H1 (cell line): ENCODE measurements at regions of chr1 and their contacts with region 1.

Region 1: GRCh38 chr1:23496490-23497181 is 12.7 kb upstream of the ASAP3 start:
- DNase-seq: no peak
- H3K4me3 ChIP-seq: no peak overlapping the region
- H3K27ac ChIP-seq: no peak overlapping the region
- H3K4me1 ChIP-seq: no peaks in the 10 kb centered on the region
- H3K27me3 ChIP-seq: no peaks in the 10 kb centered on the region
- CTCF ChIP-seq: no peak
- EP300 ChIP-seq: no peak
- POLR2A ChIP-seq: no peak
- RAD21 ChIP-seq: no peak

Region 2: DNA sequence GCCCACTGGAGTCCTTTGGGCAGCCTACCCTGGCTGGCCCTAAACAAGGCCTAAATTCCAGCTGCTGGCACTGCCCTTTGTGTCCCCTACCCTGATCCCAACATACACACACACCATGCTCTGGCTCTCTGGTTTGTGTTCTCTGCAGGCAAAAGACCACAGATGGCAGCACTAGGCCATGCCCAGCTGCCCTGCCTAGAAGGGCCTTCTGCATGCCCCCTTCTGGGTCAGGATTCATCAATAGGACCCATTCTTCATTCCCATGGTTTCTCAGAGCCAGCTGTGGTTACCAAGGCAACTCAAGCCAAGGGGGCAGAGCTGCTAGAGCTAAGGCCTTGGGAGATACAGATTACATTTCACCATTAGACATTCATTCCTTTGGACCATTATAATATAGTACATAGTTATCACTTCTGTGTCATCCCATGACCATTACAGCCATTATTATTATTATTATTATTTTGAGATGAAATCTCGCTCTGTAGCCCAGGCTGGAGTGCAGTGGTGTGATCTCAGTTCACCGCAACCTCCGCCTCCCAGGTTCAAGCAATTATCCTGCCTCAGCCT is 30.1 kb before region 1 on chr1:
- CTCF ChIA-PET with region 1: interaction called, 10 read pairs
- POLR2A ChIA-PET with region 1: no interaction called
- DNase-seq: no peak
- H3K4me3 ChIP-seq: no peak overlapping the region
- H3K27ac ChIP-seq: no peak overlapping the region
- H3K4me1 ChIP-seq: no peaks in the 10 kb centered on the region
- H3K27me3 ChIP-seq: no peaks in the 10 kb centered on the region
- CTCF ChIP-seq: peak in 1 of 3 experiments; percentile 5; a peak in 1 of 4 replicates
- EP300 ChIP-seq: no peak
- POLR2A ChIP-seq: no peak
- RAD21 ChIP-seq: 0 out of 4 replicates have a peak, but pooled peaks of 1 of the 2 experiments have one; percentile 8

Region 3: GRCh38 chr1:23514111-23514679 is 17.6 kb after region 1 on chr1:
- CTCF ChIA-PET with region 1: interaction called, 230 read pairs
- POLR2A ChIA-PET with region 1: no interaction called
- DNase-seq: no peak
- H3K4me3 ChIP-seq: no peak overlapping the region
- H3K27ac ChIP-seq: no peak overlapping the region
- H3K4me1 ChIP-seq: no peaks in the 10 kb centered on the region
- H3K27me3 ChIP-seq: no peaks in the 10 kb centered on the region
- CTCF ChIP-seq: no peak
- EP300 ChIP-seq: no peak
- POLR2A ChIP-seq: no peak
- RAD21 ChIP-seq: no peak

Region 4: GRCh38 chr1:23539698-23540266 is 43.1 kb after region 1 on chr1:
- CTCF ChIA-PET with region 1: interaction called, 149 read pairs
- POLR2A ChIA-PET with region 1: no interaction called
- DNase-seq: peak; percentile 95 to 98
- H3K4me3 ChIP-seq: no peak overlapping the region
- H3K27ac ChIP-seq: no peak overlapping the region
- H3K4me1 ChIP-seq: peaks cover 0 to under 1% (median 0%) of the 10 kb centered on the region in 4 experiments; a peak in 2 of 7 replicates
- H3K27me3 ChIP-seq: no peaks in the 10 kb centered on the region
- CTCF ChIP-seq: peak; percentile 82 to 97 (median 94)
- EP300 ChIP-seq: peak in 1 of 2 experiments; percentile 53; a peak in 1 of 3 replicates
- POLR2A ChIP-seq: no peak
- RAD21 ChIP-seq: peak; percentile 97 to 98

Region 5: GRCh38 chr1:23619299-23620188 is 122.9 kb after region 1 on chr1:
- CTCF ChIA-PET with region 1: no interaction called
- POLR2A ChIA-PET with region 1: no interaction called
- DNase-seq: peak in 1 of 2 experiments; percentile 72
- H3K4me3 ChIP-seq: peak overlapping the region; percentile 6 to 55 (median 28)
- H3K27ac ChIP-seq: no peak overlapping the region
- H3K4me1 ChIP-seq: peaks cover 4 to 17% (median 9%) of the 10 kb centered on the region in 4 experiments; a peak in 6 of 7 replicates
- H3K27me3 ChIP-seq: peaks cover 0 to 19% (median 13%) of the 10 kb centered on the region in 4 experiments; a peak in 5 of 7 replicates
- CTCF ChIP-seq: no peak
- EP300 ChIP-seq: no peak
- POLR2A ChIP-seq: no peak
- RAD21 ChIP-seq: no peak

Region 6: GRCh38 chr1:23643736-23644554 is 147.3 kb after region 1 on chr1:
- CTCF ChIA-PET with region 1: interaction called, 51 read pairs
- POLR2A ChIA-PET with region 1: no interaction called
- DNase-seq: no peak
- H3K4me3 ChIP-seq: no peak overlapping the region
- H3K27ac ChIP-seq: no peak overlapping the region
- H3K4me1 ChIP-seq: peaks cover 0 to 4% (median 2%) of the 10 kb centered on the region in 4 experiments; a peak in 3 of 7 replicates
- H3K27me3 ChIP-seq: peaks cover 0 to 2% (median 0%) of the 10 kb centered on the region in 4 experiments; a peak in 2 of 7 replicates
- CTCF ChIP-seq: no peak
- EP300 ChIP-seq: no peak
- POLR2A ChIP-seq: no peak
- RAD21 ChIP-seq: no peak

Region 7: DNA sequence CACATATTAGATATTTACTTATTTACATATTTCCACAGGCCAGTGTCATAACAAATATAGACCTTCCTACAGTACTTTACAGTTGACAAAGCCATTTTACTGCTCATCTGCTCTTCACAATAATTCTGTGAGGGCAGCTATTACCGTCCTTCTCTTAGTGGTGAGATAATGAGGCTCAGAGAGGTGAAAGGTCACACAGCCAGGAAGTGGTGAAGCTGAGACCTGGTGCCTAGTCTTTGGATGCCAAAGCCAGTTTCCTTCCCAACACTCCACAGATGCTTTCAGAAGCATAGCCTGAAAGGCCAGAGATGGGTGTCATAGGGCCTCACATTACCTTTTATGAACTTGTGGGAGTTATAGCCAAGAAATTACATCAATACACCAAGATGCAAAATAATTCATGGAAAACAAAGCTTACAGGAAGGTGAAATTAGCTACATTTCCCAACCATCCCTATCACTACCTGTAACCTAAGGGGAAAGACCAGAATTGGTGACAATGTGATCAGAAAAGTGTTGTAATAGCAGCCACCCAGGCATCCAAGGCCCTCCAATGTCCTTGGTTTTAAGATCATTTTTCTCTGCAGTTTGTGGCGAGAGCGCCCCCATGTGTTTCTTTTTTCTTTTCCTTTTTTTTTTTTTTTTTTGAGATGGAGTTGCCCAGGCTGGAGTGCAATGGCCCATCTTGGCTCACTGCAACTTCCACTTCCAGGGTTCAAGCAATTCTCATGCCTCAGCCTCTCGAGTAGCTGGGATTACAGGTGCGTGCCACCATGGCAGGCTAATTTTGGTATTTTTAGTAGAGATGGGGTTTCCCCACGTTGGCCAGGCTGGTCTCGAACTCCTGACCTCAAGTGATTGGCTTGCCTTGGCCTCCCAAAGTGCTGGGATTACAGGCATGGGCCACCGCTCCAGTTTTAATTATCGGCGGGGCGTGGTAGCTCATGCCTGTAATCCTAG is 168.5 kb after region 1 on chr1:
- CTCF ChIA-PET with region 1: interaction called, 25 read pairs
- POLR2A ChIA-PET with region 1: no interaction called
- DNase-seq: no peak
- H3K4me3 ChIP-seq: no peak overlapping the region
- H3K27ac ChIP-seq: no peak overlapping the region
- H3K4me1 ChIP-seq: no peaks in the 10 kb centered on the region
- H3K27me3 ChIP-seq: no peaks in the 10 kb centered on the region
- CTCF ChIP-seq: peak; percentile 1 to 60 (median 53)
- EP300 ChIP-seq: no peak
- POLR2A ChIP-seq: no peak
- RAD21 ChIP-seq: peak; percentile 64 to 68